ENCODE measurements at regions of chr7 and their contacts with region 1.

Region 1: DNA sequence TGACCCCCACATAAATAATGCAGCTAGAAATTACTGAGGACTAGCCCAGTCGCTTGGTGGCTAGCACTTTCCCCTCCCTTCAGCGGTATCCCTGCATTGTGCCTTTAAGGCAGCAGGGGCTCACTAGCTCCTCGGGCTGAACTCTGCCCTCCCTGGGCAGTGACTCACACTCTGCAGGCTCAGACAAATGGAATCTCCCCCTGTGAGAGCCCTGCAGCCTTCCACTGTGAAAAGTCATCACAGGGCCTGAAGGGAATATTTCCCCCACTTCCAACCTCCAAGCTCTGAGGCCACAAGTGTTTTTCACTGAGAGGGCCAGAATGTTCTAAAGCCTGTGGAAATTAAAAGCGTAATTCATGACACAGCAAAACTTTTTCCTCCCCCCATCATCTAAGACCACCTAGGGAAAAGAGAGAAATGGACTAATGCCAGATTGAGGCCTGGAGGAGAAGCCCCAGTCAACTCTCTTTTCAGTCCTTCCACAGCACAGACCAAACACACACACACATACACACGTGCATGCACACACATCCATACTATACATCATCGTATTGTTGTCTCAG is 93.6 kb upstream of the COL1A2 start:
- DNase-seq: peak; percentile 23 to 69 (median 44)
- ATAC-seq: peak; percentile 96
- H3K4me3 ChIP-seq: no peak overlapping the region
- H3K27ac ChIP-seq: no peak overlapping the region
- H3K4me1 ChIP-seq: peaks cover 0 to 2% of the 10 kb centered on the region in 2 experiments; a peak in 3 of 5 replicates
- H3K27me3 ChIP-seq: no peaks in the 10 kb centered on the region
- CTCF ChIP-seq: peak in 2 of 3 experiments; percentile 18 to 23; a peak in 1 of 6 replicates
- EP300 ChIP-seq: no peak
- POLR2A ChIP-seq: no peak
- RAD21 ChIP-seq: 0 out of 4 replicates have a peak, but pooled peaks of 1 of the 2 experiments have one; percentile 3

Region 2: DNA sequence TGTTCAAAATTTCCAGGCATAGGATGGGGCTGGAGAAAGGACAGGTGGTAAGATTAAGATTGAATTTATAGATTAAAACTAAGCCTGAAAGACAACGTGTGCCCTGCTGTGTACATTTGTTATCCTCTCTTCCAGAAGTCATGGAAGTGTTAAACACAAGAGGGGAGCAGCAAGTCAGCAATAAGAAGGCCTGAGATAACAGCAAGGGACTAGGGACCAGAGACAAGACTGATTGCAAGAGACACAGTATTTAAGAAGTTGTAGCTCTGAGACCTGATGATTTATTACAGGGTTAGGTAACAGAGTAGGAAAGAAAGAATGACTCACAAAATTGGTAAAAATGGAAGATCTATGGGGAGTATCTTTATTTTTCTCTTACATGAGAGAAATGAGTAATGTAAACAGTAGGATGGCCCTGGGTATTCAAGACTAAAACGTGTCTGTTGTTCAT is 37.8 kb after region 1 on chr7:
- CTCF ChIA-PET with region 1: no interaction called
- POLR2A ChIA-PET with region 1: no interaction called
- in situ Hi-C with region 1: no loop called
- intact Hi-C with region 1: loop called (anchors 5 kb)
- DNase-seq: peak; percentile 34 to 70 (median 52)
- ATAC-seq: peak; percentile 85
- H3K4me3 ChIP-seq: no peak overlapping the region
- H3K27ac ChIP-seq: no peak overlapping the region
- H3K4me1 ChIP-seq: peaks cover 0 to 3% of the 10 kb centered on the region in 2 experiments; a peak in 2 of 5 replicates
- H3K27me3 ChIP-seq: no peaks in the 10 kb centered on the region
- CTCF ChIP-seq: no peak
- EP300 ChIP-seq: no peak
- POLR2A ChIP-seq: no peak
- RAD21 ChIP-seq: peak in 1 of 2 experiments; percentile 34; a peak in 1 of 4 replicates

Region 3: DNA sequence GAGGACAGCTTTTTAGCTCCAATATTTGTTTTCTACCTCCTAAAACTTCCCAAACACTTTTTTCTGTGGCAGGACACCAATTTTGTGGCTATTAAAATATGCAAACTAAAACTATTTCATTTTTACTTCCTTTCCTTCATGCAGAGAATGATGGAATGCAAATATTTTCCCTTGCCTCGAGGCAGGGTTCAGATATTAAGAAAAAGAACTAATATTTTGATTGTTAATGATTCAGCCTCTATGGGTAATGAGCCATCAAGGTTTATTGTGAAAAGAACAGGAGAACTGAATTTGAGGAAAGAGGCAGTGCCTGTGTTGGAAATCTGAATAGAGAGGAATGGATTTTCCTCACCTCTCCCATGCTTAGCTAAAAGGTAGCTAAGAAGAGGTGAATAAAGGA is 165.4 kb after region 1 on chr7:
- CTCF ChIA-PET with region 1: no interaction called
- POLR2A ChIA-PET with region 1: no interaction called
- in situ Hi-C with region 1: no loop called
- intact Hi-C with region 1: no loop called
- DNase-seq: no peak
- ATAC-seq: no peak
- H3K4me3 ChIP-seq: no peak overlapping the region
- H3K27ac ChIP-seq: no peak overlapping the region
- H3K4me1 ChIP-seq: no peaks in the 10 kb centered on the region
- H3K27me3 ChIP-seq: no peaks in the 10 kb centered on the region
- CTCF ChIP-seq: no peak
- EP300 ChIP-seq: no peak
- POLR2A ChIP-seq: no peak
- RAD21 ChIP-seq: no peak

Region 4: DNA sequence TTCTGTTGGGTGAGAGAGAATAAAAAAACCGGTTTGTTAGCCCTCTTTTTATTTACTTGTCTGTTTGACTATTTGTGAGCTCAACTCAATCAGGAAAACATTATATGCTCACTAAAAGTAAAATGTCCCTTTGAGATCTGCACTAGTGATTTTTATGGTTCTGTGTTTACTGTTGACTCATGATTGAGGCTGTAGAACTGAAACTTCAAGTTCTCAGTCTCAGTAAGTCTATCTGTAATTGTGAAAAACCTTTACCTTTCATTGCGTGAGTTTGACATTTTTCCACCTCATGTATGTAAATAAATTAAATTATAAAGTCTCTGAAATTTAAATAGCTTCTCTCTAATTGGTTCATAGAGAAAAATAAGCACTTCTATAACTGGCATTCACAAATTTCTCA is 191.5 kb after region 1 on chr7:
- CTCF ChIA-PET with region 1: no interaction called
- POLR2A ChIA-PET with region 1: no interaction called
- in situ Hi-C with region 1: no loop called
- intact Hi-C with region 1: no loop called
- DNase-seq: no peak
- ATAC-seq: no peak
- H3K4me3 ChIP-seq: no peak overlapping the region
- H3K27ac ChIP-seq: no peak overlapping the region
- H3K4me1 ChIP-seq: no peaks in the 10 kb centered on the region
- H3K27me3 ChIP-seq: peaks cover 0 to 7% of the 10 kb centered on the region in 2 experiments; a peak in 1 of 5 replicates
- CTCF ChIP-seq: no peak
- EP300 ChIP-seq: no peak
- POLR2A ChIP-seq: no peak
- RAD21 ChIP-seq: no peak